ENCODE measurements at regions of chr2 and their contacts with region 1.

Region 1: DNA sequence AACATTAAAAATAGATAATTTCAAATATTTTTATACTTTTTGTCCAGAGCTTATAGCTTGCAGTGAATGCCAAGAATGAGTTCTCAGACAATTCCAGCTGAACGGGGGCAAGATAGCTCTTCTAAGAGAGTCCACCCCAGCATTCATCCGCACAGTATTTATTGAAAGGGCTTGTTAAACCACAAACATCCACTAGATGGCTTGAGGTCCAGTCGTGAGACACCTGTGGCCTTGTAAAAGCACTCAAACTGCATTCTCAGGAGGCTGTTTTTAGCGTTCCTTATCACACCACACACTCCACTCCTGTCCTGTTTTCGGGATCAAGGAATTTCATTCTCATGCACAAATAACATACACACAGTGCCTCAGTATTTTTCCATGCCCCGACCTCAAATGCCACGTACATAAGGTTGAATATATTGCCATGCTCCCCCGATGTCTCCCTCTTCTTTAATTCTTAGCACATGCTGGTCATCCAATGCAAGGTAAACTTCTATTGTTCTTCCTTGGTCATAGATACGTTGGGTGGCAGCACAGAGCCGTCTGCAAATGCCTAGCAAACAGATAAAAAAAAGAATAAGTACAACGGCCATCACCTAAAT is 47.4 kb downstream of the DNAJC10 start:
- DNase-seq: no peak
- CTCF ChIP-seq: peak; percentile 41

Region 2: DNA sequence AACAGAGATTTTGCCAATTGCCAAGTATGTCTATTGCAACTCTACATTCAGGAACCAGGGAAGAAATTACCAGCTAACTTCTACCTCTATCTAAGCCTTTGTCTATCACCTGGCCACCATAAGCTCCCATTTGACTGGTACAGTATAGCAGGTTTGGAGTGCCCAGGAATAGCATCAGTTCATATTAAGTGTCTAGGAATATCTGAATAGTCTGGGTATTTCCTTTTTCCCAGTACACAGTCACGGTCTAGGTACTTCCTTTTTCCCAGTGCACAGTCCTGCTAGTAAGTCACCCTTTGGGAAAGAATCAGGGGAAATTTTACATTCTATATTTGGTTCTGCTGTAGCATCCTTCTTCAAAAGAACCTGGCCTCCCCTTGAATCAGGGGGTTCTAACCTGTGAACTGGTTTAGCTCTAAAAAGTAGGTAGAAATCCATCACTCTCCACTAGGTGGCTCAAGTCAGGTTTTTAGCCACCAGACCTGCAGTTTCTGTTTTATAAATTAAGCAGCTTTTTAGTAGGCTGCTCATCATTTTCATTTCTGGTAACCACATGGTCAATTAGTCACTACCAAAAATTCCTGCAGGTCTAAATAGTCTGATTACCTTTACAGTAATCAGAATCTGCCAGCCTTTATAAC is 96.6 kb before region 1 on chr2:
- CTCF ChIA-PET with region 1: no interaction called
- POLR2A ChIA-PET with region 1: no interaction called
- DNase-seq: peak; percentile 41
- CTCF ChIP-seq: peak; percentile 49

Region 3: DNA sequence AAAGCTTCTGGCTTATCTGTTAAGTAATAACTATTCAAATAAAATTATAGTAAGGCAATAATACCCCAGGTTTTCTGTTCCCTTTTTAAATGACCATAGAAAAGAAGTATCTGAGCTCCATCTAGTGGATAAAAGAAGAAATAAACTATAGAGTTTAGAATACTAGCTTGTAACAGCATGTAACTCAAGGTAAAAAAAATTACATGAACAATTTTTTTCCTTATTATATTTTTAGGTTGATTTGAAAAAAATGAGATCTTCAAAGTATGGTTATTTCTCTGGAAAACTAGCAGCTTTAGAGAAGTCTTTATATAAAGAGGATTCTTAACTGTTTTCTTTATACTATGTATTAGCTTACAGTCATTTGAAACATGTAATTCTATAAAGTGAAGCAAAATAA is 216.7 kb after region 1 on chr2:
- CTCF ChIA-PET with region 1: interaction called, 29 read pairs
- POLR2A ChIA-PET with region 1: no interaction called
- DNase-seq: peak; percentile 39
- CTCF ChIP-seq: peak; percentile 48